Psoas muscle (tissue), 8 donors: ENCODE measurements at regions of chr3 and their contacts with region 1.

Region 1: DNA sequence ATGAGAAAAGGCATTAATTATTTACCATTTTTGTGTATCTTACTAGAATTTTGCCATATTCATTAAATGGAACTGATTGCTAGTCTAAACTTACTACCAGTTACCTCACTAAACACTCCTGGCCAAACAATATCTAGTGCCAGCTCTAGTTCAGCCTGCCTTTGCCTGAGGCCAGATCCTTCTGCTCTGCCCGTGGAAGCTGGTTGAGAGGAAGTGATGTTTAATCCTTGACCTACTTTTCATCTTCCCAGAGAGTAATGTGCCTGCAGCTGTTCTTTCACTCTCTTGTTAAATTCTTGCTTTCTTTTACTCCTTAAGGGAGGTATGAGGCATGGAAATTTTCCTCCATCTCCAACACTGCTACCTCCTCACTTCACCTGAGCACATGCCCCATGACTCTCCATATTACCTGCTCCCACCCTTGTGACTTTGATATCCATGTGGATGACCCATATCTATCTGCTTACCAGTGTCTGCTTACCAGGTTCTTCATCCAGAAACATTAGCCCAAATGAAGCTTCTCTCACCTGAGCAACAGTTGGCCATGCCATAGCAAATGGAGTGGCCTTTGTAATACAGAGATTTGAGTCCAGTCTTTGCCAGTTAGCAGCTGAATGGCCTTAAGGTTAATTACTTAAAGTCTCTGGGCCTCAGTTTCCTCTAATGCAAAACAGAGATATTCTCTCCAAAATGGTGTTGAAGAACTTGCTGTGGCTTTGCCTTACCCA is 53.4 kb downstream of the UBE2E1 start:
- DNase-seq: peak in 1 of 2 donors; percentile 67
- ATAC-seq: peak; percentile 91 to 95 (median 94)
- H3K4me3 ChIP-seq: no peak overlapping the region
- H3K27ac ChIP-seq: peak overlapping the region; percentile 89
- H3K4me1 ChIP-seq: peaks cover 63% of the 10 kb centered on the region
- H3K27me3 ChIP-seq: no peaks in the 10 kb centered on the region
- CTCF ChIP-seq: no peak

Region 2: DNA sequence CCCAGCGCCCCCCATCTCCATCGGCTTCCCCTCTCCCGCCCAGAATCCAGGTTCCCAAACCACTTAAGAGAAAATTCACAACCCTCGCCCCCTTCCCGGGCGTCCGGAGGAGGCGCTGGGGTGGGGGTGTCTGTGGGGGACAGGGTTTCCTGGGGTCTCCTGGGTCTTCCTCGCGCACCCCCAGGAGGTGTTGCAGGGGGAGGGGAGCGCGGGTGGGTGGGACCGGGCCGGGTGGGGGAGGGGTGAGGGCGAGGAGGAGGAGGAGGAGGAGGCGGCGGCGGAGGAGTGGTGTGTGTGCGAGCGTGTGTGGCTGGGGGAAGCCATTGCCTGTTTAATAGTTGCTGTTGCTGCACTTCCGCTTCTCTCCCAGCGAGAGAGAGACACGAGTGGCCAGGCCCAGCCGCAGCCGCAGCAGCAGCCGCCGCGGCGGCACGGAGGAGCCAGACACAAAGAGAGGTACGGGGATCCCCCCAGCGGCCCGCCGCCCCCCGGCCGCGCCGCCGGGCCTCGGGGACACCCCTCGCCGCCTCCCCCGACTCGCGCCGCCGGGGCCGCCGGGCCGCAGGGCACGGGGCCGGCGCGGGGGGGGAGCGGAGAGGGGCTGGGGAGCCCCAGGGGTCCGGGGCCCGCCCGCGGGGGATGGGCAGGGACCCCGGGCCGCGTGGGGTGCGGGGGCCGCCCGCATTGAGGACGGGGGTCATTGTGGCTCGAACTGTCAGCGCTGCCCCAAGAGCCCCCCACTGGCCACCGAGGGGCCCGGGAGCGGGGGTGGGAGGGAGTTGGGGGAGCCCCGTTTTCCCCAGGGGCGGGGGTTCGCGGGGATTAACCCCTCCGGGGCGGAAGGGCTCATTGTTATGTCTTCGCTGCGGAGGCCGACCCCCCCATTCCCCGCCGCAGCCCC is 53.3 kb before region 1 on chr3 and contains the start of gene UBE2E1:
- intact Hi-C with region 1: loop called in 1 of 2 experiments (anchors 5 kb)
- DNase-seq: peak; percentile 68 to 87
- ATAC-seq: peak; percentile 58 to 73 (median 68)
- H3K4me3 ChIP-seq: peak within 1 kb of the TSS; percentile 93
- H3K27ac ChIP-seq: peak within 1 kb of the TSS; percentile 93
- H3K4me1 ChIP-seq: peaks cover 25% of the 10 kb centered on the region
- H3K27me3 ChIP-seq: no peaks in the 10 kb centered on the region
- CTCF ChIP-seq: no peak
- total RNA-seq, gene UBE2E1: 54.1 to 112 (median 90.1) TPM

Region 3: DNA sequence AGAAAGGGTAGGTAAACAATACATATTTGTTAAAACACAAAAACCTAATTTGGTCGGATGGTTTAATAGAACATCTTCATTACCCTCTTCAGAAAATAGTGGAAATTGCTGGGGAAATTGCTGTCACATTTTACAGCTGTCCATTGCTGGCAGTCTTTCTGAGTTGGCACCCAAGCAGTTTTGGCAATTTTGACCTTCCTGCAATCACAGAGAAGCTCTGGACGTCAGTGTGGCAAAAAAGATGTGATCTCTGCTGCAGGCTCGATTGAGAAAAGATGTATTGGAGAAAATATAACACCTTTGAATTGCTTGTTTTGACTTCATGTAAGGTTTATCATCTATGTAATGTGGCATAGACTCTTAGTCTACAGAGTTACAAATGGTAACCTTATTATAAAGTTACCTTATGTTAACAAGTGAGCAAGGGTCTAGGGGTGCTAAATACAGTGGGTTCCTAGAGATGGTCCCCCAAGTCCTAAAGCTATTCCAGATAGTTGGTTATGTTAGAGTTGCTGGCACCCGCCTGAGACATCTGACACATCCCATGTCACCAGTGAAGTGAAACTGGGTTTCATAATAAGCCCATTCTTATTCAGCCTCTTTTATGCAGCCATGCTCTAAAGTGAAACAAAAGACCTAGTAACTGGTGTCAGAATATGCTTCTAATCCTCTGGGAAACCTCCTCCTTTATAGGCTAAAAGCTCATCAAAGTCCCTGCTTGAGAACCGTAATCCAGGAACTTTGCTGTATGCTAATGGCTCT is 39.4 kb before region 1 on chr3:
- intact Hi-C with region 1: no loop called
- DNase-seq: no peak
- ATAC-seq: peak; percentile 33 to 69 (median 60)
- H3K4me3 ChIP-seq: no peak overlapping the region
- H3K27ac ChIP-seq: no peak overlapping the region
- H3K4me1 ChIP-seq: peaks cover 38% of the 10 kb centered on the region
- H3K27me3 ChIP-seq: no peaks in the 10 kb centered on the region
- CTCF ChIP-seq: no peak

Region 4: DNA sequence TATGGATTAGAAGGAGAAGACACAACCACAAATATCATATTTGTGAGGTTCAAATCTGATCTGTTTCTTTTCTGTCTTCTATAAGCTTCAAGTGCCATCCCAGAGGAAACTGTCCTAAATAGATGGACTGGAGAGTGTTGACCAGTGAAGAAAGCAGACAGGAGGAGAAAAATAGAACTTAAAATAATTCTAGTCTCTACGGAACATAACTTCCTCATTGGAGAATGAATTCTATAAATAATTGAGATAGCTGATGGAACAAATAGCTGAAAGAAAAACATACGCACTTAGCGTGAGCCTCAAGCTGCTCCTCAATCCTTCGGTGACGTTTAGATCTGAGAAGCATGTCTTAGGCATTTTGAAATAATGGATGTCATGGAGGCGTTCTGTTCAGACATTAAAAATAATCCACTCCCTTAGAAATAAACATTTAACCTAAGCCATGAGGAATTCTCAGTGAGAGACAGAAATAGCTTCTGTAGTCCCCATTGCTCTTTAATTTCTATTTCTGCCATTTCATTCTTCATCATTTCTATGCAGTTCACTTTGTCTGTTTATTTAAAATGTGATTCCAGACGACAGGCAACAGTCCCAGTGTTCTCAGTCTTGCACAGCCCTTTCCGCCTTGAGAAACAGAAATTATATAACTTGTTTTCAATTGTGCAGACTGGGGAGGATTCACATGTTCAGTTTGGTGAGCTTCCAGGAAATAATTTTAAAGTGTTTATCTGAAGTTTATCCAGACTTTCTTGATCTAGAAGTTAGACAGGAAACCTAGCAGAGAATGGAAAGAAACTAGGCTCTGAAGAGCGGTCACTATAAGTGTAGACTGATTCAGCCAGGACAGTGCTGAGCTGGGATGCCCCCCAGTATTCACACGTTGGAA is 183.2 kb after region 1 on chr3:
- intact Hi-C with region 1: no loop called
- DNase-seq: no peak
- ATAC-seq: peak in 1 of 4 donors; percentile 50
- H3K4me3 ChIP-seq: no peak overlapping the region
- H3K27ac ChIP-seq: peak overlapping the region; percentile 6
- H3K4me1 ChIP-seq: peaks cover 9% of the 10 kb centered on the region
- H3K27me3 ChIP-seq: no peaks in the 10 kb centered on the region
- CTCF ChIP-seq: no peak